ENCODE measurements at regions of chr5 and their contacts with region 1.

Region 1: DNA sequence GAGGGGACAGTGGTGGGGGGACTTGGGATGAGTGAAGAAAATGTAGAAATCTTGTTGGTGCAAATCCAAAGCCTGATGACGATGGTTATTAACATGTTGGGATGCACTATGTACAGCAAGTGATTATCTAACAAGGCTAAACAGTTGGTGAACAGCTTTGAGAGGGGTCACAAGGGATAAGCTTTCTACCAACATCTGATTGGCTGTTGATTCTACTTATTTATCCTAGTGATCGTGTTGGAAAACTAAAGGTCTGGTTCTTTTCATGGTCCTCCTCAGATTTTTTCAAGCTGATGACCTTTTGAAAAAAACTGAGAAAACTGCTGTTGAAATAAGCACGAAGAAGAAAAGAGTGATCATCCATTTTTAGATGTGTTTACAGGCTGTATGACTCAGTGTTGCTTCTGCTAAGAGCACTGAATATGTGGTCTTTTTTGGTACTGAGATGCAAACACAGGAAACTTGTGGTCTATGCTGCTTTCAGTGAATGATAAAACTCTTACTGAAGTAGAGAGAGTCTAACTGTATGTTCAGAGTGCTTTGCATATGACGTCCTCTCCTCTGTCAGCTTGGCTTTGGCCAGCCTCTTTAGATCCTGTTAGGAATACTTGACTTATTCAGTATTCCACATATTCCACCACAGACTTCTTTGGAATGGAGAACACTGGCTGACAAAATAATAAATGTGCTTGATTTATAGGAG is 174.8 kb downstream of the SLF1 start:
- DNase-seq: peak; percentile 33
- ATAC-seq: peak; percentile 97
- H3K4me3 Mint-ChIP-seq: peak overlapping the region; percentile 58
- H3K27ac Mint-ChIP-seq: peak overlapping the region; percentile 93
- H3K4me1 Mint-ChIP-seq: peaks cover 44% of the 10 kb centered on the region
- H3K27me3 Mint-ChIP-seq: no peaks in the 10 kb centered on the region

Region 2: DNA sequence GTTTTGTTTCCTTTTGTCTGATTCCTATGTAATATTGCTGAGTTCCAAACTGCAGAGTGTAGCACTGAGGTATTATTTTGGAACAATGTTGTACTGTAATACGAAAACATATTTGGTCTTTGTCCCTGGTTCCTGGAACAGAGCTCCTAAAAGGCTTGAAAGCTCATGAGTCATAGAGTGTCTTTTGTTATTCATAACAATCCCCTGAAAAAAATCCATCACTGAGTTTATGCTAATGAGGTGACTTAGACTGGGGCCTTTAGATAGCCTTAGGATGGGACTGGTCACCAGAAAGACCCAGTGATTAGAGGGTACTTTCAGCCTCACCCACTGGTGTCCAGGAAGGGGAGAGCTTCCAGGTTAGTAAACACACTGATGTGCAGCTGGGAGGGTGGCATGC is 919.2 kb before region 1 on chr5:
- CTCF ChIA-PET with region 1: no interaction called
- POLR2A ChIA-PET with region 1: no interaction called
- intact Hi-C with region 1: loop called in 1 of 2 experiments (anchors 10 kb)
- DNase-seq: peak; percentile 7
- ATAC-seq: peak; percentile 89
- H3K4me3 Mint-ChIP-seq: no peak overlapping the region
- H3K27ac Mint-ChIP-seq: peak overlapping the region; percentile 58
- H3K4me1 Mint-ChIP-seq: peaks cover 12% of the 10 kb centered on the region
- H3K27me3 Mint-ChIP-seq: no peaks in the 10 kb centered on the region

Region 3: GRCh38 chr5:94407023-94407422 is 386.2 kb before region 1 on chr5:
- CTCF ChIA-PET with region 1: no interaction called
- POLR2A ChIA-PET with region 1: no interaction called
- intact Hi-C with region 1: no loop called
- DNase-seq: no peak
- ATAC-seq: no peak
- H3K4me3 Mint-ChIP-seq: no peak overlapping the region
- H3K27ac Mint-ChIP-seq: no peak overlapping the region
- H3K4me1 Mint-ChIP-seq: no peaks in the 10 kb centered on the region
- H3K27me3 Mint-ChIP-seq: no peaks in the 10 kb centered on the region

Region 4: DNA sequence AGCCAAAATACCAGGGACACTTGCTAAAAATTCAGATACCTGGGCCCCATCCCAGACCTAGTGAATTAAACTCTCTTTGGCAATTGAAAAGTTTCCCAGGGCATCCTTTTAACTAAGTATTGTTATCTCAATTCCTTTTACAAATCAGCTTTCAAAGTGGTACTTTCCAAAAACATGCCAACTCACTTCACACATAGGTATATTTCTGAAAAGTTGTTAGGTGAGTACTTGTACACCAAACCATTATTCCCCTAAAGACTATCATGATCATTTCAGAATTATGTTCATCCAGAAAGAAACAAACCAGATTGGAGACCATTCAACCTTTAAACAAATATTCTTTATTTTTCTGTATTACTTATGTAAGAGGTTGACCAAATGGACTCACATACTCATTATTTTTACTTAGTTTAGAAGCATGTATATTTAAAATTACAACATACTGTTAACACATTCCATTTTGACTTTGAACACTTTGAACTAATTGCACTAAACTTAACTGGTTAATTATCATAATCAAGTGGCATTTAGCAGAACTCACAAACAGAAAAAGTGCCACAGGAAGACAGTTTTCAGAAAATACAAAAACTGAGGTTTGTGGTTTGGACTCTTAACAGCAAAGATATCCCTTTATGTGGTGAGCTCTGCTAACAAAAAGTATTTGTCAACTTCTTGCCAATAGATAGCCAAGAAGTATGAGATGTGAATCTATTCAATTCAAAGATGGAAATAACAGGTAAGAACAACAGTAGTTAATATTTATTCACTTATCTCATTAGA is 215.6 kb before region 1 on chr5:
- CTCF ChIA-PET with region 1: no interaction called
- POLR2A ChIA-PET with region 1: no interaction called
- intact Hi-C with region 1: loop called in 1 of 2 experiments (anchors 5 kb)
- DNase-seq: no peak
- ATAC-seq: peak; percentile 59
- H3K4me3 Mint-ChIP-seq: no peak overlapping the region
- H3K27ac Mint-ChIP-seq: no peak overlapping the region
- H3K4me1 Mint-ChIP-seq: peaks cover 29% of the 10 kb centered on the region
- H3K27me3 Mint-ChIP-seq: no peaks in the 10 kb centered on the region

Region 5: DNA sequence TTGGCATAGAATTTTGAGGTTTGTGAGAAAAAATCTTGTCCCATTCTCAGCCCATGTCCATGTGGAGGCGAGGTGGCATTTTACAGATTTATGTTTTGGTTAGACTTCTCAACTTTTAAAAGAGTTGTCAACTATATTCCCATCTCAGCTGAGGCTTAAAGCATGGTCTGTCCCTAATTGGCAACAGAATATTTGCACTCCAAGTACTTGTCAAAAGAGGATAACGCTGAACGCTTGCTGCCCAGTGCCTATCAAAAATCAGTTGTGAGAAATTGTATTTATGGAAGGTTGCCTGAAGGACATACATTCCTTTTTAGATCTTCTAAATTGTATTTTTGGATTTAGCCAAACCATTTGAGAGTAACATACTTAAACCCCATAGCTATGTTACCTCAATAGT is 27.2 kb after region 1 on chr5:
- CTCF ChIA-PET with region 1: no interaction called
- POLR2A ChIA-PET with region 1: no interaction called
- intact Hi-C with region 1: no loop called
- DNase-seq: no peak
- ATAC-seq: no peak
- H3K4me3 Mint-ChIP-seq: no peak overlapping the region
- H3K27ac Mint-ChIP-seq: no peak overlapping the region
- H3K4me1 Mint-ChIP-seq: no peaks in the 10 kb centered on the region
- H3K27me3 Mint-ChIP-seq: no peaks in the 10 kb centered on the region

Region 6: DNA sequence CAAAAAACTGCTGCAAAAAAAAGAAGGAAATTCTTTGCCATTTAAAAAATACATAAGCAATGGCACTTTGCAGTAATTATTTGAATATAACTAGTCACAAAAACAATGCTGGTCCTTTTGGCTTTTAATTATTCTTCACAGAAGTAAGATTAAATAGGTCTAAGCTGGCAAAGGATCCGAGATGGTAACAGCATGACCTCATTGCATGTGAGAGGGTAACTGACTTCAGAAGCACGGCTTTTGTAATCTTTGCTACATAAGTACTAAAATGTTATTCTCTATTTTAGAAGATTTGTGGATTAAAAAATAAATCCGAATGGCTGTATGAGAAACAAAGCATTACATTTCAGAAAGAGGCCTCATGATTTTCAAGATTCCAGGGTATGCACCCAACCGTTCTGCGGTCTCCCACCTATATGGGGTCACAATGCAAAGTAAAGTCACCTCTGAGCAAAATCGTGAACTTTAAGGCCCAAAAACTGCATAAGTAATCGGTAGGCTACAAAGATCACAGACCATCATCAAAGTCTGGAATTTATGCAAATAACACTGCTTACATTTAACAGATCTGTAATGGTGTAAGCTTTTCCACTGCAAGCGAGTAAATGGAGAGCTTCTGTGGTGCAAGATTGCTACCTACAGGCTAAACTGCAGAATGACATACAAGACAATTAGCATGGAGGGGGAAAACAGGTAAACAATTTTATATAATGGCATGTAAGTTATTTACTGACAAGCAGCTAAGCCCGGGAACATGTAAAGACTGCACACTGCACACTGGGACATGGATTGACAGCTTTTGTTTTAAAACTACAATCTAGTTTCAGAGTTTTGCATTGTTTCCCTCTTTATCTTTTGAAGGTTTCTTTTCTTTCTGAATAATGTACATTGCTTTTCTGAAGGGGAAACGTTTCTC is 56.8 kb after region 1 on chr5:
- CTCF ChIA-PET with region 1: no interaction called
- POLR2A ChIA-PET with region 1: no interaction called
- intact Hi-C with region 1: loop called in 1 of 2 experiments (anchors 2 kb)
- DNase-seq: peak; percentile 43
- ATAC-seq: peak; percentile 87
- H3K4me3 Mint-ChIP-seq: no peak overlapping the region
- H3K27ac Mint-ChIP-seq: no peak overlapping the region
- H3K4me1 Mint-ChIP-seq: peaks cover 8% of the 10 kb centered on the region
- H3K27me3 Mint-ChIP-seq: no peaks in the 10 kb centered on the region

Region 7: DNA sequence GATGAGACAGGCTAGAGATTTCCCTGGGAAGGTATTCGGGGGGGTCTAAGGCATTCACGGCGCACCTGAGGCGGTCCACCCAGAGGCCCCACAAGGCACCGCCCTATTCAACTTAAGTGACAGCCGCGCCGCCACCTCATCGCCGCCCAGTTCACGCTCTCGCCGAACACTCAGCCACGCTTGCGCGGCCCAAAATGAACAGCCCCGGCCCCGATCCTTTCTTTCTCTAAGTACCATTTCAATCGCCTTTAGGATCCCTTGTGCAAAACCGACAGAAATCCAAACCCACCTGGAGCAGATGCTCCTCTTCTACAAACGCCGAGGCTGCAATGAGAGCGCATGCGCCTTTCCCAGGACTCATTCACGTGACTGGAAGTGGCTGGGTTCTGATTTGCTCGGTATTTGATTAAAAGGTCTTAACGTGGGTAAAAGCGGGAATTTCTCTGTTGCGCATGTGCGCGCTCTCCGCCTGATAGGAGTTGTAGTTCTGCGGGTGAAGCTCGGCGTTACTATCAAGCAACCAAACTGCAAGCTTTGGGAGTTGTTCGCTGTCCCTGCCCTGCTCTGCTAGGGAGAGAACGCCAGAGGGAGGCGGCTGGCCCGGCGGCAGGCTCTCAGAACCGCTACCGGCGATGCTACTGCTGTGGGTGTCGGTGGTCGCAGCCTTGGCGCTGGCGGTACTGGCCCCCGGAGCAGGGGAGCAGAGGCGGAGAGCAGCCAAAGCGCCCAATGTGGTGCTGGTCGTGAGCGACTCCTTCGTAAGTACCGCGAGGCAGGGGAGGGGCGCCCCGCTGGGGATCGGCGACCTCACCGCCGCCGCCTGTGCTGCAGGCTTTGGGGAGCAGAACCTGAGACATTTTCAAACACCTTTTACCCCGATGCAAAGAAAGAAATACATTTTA is 761.6 kb after region 1 on chr5 and contains the starts of genes ARSK and SKIC3:
- CTCF ChIA-PET with region 1: no interaction called
- POLR2A ChIA-PET with region 1: no interaction called
- intact Hi-C with region 1: loop called in 1 of 2 experiments (anchors 10 kb)
- DNase-seq: peak; percentile 92
- ATAC-seq: peak; percentile 91
- H3K4me3 Mint-ChIP-seq: peak within 1 kb of the TSS; percentile 88
- H3K27ac Mint-ChIP-seq: peak within 1 kb of the TSS; percentile 90
- H3K4me1 Mint-ChIP-seq: peaks cover 37% of the 10 kb centered on the region
- H3K27me3 Mint-ChIP-seq: no peaks in the 10 kb centered on the region
- total RNA-seq, gene ARSK: 4.6 to 5.3 TPM
- total RNA-seq, gene SKIC3: 74.6 to 75.8 TPM

Measured in activated CD4-positive, alpha-beta T cell treated with anti-CD3 and anti-CD28 coated beads for 36 hours (primary cell).